GM10248 (cell line): ENCODE measurements at regions of chr5 and their contacts with region 1.

Region 1: DNA sequence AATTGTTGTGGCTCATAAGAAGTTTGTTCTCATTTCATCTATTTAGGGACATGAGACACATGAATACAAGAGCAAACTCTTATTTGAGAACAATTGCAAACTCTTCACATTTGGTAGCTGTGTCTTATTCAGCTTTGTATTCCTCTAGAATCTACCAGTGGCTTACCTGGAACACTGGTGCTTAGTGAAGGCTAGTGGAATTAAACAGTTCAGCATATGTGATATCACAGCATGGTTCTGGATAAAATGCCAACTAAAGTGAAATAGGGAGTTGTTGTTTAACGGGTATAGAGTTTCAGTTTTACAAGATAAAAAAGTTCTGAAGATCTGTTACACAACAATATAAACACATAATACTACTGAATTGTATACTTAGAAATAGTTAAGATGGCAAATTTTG is 48.9 kb downstream of the NRG2 start:
- DNase-seq: no peak
- CTCF ChIP-seq: no peak

Region 2: DNA sequence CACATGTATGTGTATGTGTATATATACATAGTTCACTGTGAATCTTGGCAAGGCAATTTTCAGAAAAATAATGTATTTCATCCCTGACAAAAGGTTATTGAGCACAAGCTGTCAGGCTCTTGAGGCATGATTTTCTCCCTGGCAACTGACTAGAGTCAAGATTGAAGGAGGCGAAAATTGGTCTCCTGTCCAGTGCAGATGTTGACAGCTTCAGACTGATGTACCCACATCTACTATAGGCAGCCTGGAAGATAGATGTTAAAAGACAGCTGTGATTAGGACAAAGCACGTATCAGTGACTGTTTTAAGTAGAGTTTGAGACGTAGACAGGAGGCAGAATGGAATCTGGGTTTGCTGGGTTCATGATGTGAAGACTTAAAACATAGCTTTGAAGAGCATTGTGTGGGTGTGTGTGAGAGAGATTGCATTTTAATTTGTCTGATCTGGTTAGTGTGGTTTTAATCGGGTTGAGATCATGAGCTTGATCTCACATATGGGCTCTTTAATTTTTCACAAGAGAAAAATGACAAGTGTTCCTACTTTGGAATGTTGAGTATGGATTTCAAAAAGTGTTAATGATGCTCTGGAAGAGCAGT is 1201.9 kb before region 1 on chr5:
- CTCF ChIA-PET with region 1: no interaction called
- POLR2A ChIA-PET with region 1: no interaction called
- DNase-seq: no peak
- CTCF ChIP-seq: no peak

Region 3: GRCh38 chr5:140005145-140005591 is 10.9 kb after region 1 on chr5:
- CTCF ChIA-PET with region 1: interaction called, 22 read pairs
- POLR2A ChIA-PET with region 1: no interaction called
- DNase-seq: peak; percentile 70
- CTCF ChIP-seq: no peak